Naive thymus-derived CD4-positive, alpha-beta T cell (primary cell): ENCODE measurements at regions of chr11 and their contacts with region 1.

Region 1: GRCh38 chr11:31499576-31500178 is 9.7 kb downstream of the IMMP1L start:
- DNase-seq: no peak
- ATAC-seq: no peak
- H3K4me3 ChIP-seq: no peak overlapping the region
- H3K4me3 Mint-ChIP-seq: no peak overlapping the region
- H3K27ac ChIP-seq: no peak overlapping the region
- H3K27ac Mint-ChIP-seq: no peak overlapping the region
- H3K4me1 ChIP-seq: no peaks in the 10 kb centered on the region
- H3K4me1 Mint-ChIP-seq: peaks cover 5 to 71% (median 47%) of the 10 kb centered on the region in 7 donors
- H3K27me3 ChIP-seq: no peaks in the 10 kb centered on the region
- H3K27me3 Mint-ChIP-seq: no peaks in the 10 kb centered on the region

Region 2: DNA sequence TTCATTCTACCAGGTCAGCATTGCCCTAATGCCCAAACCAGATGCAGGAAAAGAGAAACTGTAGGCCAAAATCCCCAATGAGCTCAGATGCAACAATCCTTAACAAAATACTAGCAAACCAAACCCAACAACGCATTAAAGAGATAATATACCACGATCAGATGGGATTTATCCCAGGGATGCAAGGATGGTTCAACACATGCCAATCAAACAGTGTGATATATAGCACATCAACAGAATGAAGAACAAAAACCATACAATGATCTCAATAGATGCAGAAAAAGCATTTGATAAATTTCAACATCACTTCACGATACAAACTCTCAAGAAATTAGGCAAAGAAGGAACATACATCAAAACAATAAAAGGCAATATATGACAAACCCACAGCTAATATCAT is 35.2 kb before region 1 on chr11:
- CTCF ChIA-PET with region 1: no interaction called
- POLR2A ChIA-PET with region 1: no interaction called
- intact Hi-C with region 1: loop called in 1 of 2 experiments (anchors 5 kb)
- DNase-seq: no peak
- ATAC-seq: no peak
- H3K4me3 ChIP-seq: no peak overlapping the region
- H3K4me3 Mint-ChIP-seq: no peak overlapping the region
- H3K27ac ChIP-seq: no peak overlapping the region
- H3K27ac Mint-ChIP-seq: peak overlapping the region in 1 of 9 donors; percentile 9
- H3K4me1 ChIP-seq: no peaks in the 10 kb centered on the region
- H3K4me1 Mint-ChIP-seq: peaks cover 0 to 10% (median 0%) of the 10 kb centered on the region in 7 donors
- H3K27me3 ChIP-seq: no peaks in the 10 kb centered on the region
- H3K27me3 Mint-ChIP-seq: no peaks in the 10 kb centered on the region

Region 3: GRCh38 chr11:31477528-31478222 is 22.0 kb before region 1 on chr11:
- CTCF ChIA-PET with region 1: no interaction called
- POLR2A ChIA-PET with region 1: no interaction called
- intact Hi-C with region 1: no loop called
- DNase-seq: no peak
- ATAC-seq: no peak
- H3K4me3 ChIP-seq: no peak overlapping the region
- H3K4me3 Mint-ChIP-seq: no peak overlapping the region
- H3K27ac ChIP-seq: no peak overlapping the region
- H3K27ac Mint-ChIP-seq: no peak overlapping the region
- H3K4me1 ChIP-seq: no peaks in the 10 kb centered on the region
- H3K4me1 Mint-ChIP-seq: peaks cover 0 to 16% (median 5%) of the 10 kb centered on the region in 7 donors
- H3K27me3 ChIP-seq: no peaks in the 10 kb centered on the region
- H3K27me3 Mint-ChIP-seq: no peaks in the 10 kb centered on the region